Gastrocnemius medialis (tissue), 4 donors: ENCODE measurements at regions of chr14 and their contacts with region 1.

Region 1: GRCh38 chr14:21098076-21098891 is at the start of gene ZNF219:
- DNase-seq: peak; percentile 34 to 48
- ATAC-seq: peak; percentile 48 to 50
- H3K4me3 ChIP-seq: peak within 1 kb of the TSS; percentile 71 to 93 (median 76)
- H3K27ac ChIP-seq: peak within 1 kb of the TSS; percentile 92 to 96 (median 94)
- H3K4me1 ChIP-seq: peaks cover 20 to 30% of the 10 kb centered on the region in 2 donors
- H3K27me3 ChIP-seq: no peaks in the 10 kb centered on the region
- CTCF ChIP-seq: peak in 2 of 5 experiments; percentile 28 to 35
- POLR2A ChIP-seq: no peak
- total RNA-seq, gene ZNF219: 25.9 to 48.9 (median 43.9) TPM

Region 2: DNA sequence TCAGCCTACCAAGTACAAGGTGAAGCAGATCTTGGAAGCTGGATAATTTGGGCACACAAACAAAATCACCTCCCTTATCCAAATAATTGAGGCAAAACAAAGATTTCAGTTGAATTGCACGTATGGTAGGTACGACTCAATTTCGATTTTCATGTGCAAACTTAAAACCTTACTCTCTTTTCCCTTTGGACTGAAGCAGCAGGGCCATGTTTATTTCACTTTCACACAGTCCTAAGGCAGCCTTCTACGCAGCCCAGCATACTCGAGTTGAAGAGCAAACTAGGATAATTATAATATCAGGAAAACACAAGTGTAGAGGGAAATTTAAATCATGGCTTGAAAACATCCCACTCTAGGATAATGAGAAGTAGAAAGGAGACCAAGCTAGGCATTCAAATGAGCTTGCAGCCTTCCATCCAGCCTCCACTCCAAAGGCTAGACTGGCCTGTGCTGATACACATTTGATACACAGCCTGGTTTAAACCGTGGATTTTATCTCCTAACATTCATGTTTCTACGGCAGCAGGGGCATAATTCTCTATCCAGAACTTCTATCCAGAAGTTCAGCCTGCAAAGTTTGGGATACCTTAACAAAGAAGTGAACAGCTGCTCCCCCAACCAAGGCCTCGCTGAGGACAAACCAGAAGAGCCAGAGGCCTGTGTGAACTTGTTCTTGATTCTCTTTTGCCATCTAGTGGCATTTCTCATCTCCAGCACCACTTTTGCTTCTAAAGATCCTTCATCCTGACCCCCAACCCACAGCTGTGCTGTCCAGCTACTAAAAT is 58.5 kb before region 1 on chr14:
- in situ Hi-C with region 1: no loop called
- intact Hi-C with region 1: no loop called
- DNase-seq: peak in 1 of 2 donors; percentile 72
- ATAC-seq: peak; percentile 53 to 68
- H3K4me3 ChIP-seq: peak overlapping the region in 2 of 4 donors; percentile 19 to 26
- H3K27ac ChIP-seq: peak overlapping the region; percentile 83 to 91 (median 86)
- H3K4me1 ChIP-seq: peaks cover 62 to 75% of the 10 kb centered on the region in 2 donors
- H3K27me3 ChIP-seq: no peaks in the 10 kb centered on the region
- CTCF ChIP-seq: peak; percentile 77 to 84 (median 79)
- POLR2A ChIP-seq: peak in 1 of 2 donors; percentile 1

Region 3: GRCh38 chr14:21057803-21058675 is 40.2 kb before region 1 on chr14 and contains the start of gene RNASE8:
- in situ Hi-C with region 1: no loop called
- intact Hi-C with region 1: loop called (anchors 5 kb)
- DNase-seq: no peak
- ATAC-seq: no peak
- H3K4me3 ChIP-seq: no peak within 1 kb of the TSS
- H3K27ac ChIP-seq: no peak within 1 kb of the TSS
- H3K4me1 ChIP-seq: no peaks in the 10 kb centered on the region
- H3K27me3 ChIP-seq: no peaks in the 10 kb centered on the region
- CTCF ChIP-seq: no peak
- POLR2A ChIP-seq: no peak
- total RNA-seq, gene RNASE8: not detected